ENCODE measurements at regions of chr2 and their contacts with region 1.

Region 1: DNA sequence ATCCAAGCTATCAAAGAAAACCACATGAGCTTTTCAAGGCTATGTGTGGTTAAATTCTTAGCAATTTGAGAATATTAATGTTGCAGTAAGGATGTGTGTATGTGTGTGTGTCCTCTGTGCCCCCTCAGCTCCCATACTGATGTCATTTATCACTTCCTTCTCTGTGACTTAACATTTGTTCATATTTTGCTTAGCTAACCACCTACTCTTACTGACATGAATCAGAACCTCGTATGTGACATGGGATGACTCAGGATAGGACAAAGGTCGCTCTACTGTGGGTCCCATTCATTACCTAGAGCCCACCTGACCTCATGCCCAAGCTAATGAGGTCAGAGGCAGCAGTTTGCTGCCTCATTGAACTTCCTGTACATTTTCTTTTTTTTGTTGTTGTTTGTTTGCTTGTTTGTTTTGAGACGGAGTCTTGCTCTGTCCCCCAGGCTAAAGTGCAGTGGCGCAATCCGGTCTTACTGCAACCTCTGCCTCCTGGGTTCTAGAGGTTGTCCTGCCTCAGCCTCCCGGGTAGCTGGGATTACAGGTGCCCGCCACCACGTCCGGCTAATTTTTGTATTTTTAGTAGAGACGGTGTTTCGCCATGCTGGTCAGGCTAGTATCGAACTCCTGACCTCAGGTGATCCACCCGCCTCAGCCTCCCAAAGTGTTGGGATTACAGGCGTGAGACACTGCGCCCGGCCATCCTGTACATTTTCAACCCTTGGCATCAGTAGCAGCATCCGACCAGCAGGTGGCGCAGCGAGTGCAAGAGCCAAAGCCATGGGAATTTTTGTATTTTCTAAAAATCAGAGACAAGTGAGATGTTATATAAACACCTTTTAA is 36.4 kb downstream of the MOGAT1 start:
- DNase-seq: peak; percentile 87
- ATAC-seq: peak; percentile 18
- H3K4me3 ChIP-seq: no peak overlapping the region
- H3K27ac ChIP-seq: no peak overlapping the region
- H3K4me1 ChIP-seq: peaks cover 11% of the 10 kb centered on the region
- H3K27me3 ChIP-seq: no peaks in the 10 kb centered on the region
- CTCF ChIP-seq: peak; percentile 81
- POLR2A ChIP-seq: no peak
- RAD21 ChIP-seq: peak; percentile 76

Region 2: GRCh38 chr2:222160944-222161343 is 547.0 kb before region 1 on chr2:
- CTCF ChIA-PET with region 1: no interaction called
- POLR2A ChIA-PET with region 1: no interaction called
- dilution Hi-C with region 1: no loop called
- in situ Hi-C with region 1: no loop called
- intact Hi-C with region 1: no loop called
- DNase-seq: no peak
- ATAC-seq: no peak
- H3K4me3 ChIP-seq: no peak overlapping the region
- H3K27ac ChIP-seq: no peak overlapping the region
- H3K4me1 ChIP-seq: no peaks in the 10 kb centered on the region
- H3K27me3 ChIP-seq: no peaks in the 10 kb centered on the region
- CTCF ChIP-seq: no peak
- POLR2A ChIP-seq: no peak
- RAD21 ChIP-seq: no peak

Region 3: GRCh38 chr2:222797261-222797660 is 89.4 kb after region 1 on chr2:
- CTCF ChIA-PET with region 1: interaction called, 4 read pairs
- POLR2A ChIA-PET with region 1: no interaction called
- dilution Hi-C with region 1: no loop called
- in situ Hi-C with region 1: no loop called
- intact Hi-C with region 1: loop called (anchors 1 kb)
- DNase-seq: peak; percentile 34
- ATAC-seq: peak; percentile 52
- H3K4me3 ChIP-seq: no peak overlapping the region
- H3K27ac ChIP-seq: no peak overlapping the region
- H3K4me1 ChIP-seq: peaks cover 8% of the 10 kb centered on the region
- H3K27me3 ChIP-seq: no peaks in the 10 kb centered on the region
- CTCF ChIP-seq: peak; percentile 47
- POLR2A ChIP-seq: no peak
- RAD21 ChIP-seq: peak; percentile 41

Region 4: DNA sequence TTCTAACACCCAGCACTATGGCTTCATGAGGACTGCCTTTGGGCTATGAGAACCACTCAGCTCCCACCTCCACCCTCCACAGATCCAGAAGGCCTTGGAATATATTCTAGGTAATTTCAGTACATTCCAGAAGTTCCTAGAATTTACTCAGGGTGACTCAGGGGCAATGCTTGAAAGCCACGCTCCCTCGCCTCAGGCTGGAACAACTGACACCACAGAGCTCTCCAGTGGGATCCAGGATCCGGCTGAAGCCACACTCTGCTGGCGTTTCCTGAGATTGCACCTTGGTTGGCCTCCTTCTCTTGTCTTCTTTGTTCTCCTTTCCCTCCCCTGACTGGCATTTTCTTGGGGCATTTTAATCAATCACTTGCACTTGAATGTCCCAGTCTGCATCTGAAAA is 251.4 kb after region 1 on chr2:
- CTCF ChIA-PET with region 1: interaction called, 8 read pairs
- POLR2A ChIA-PET with region 1: no interaction called
- dilution Hi-C with region 1: no loop called
- in situ Hi-C with region 1: no loop called
- intact Hi-C with region 1: loop called (anchors 5 kb)
- DNase-seq: peak; percentile 87
- ATAC-seq: peak; percentile 98
- H3K4me3 ChIP-seq: no peak overlapping the region
- H3K27ac ChIP-seq: peak overlapping the region; percentile 71
- H3K4me1 ChIP-seq: peaks cover 7% of the 10 kb centered on the region
- H3K27me3 ChIP-seq: no peaks in the 10 kb centered on the region
- CTCF ChIP-seq: peak; percentile 55
- POLR2A ChIP-seq: no peak
- RAD21 ChIP-seq: peak; percentile 67